Posterior cingulate gyrus (tissue), 11 donors: ENCODE measurements at regions of chr4 and their contacts with region 1.

Region 1: DNA sequence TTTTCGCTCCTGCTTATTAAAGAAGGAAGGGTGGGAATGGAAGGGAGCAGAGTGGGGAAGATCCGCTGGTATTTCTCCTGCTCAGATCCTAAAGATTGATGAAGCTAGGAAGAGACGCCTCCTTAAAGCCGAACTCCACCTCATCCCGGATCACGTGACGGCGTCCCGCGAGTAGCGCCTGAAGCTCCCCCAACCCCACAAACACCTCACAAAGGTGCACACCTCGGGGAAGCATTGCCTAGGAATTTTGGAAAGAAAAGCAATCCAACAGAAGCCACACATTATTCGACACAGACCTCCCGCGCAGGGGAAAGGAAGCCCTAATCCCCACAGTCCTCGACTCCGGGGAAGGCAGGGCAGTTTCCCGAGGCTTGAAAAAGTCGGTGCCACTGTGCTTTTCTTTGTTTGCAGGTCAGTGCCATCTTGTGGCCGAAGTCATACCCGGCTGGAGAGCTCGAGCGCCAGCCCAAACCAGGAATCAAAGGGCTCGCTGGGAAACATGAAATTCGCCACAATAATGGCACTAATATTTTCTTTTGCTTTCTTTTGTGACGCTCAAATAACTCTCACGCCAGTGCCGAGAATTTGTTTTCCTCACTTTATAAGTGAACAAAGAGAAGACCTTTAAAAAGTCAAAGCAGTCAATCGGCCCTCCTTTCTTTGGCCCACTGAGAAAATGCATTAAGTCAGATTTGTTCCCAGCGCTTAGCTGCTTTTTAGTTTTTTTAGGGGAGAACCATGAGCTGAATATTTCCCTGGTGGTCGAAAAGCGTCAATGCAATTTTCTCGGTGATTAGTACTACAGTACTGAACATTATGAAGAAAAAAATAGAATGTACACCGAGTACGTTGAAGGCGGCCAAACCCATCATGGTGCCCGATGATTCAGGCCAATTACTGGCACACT is at the start of gene NPY1R:
- DNase-seq: peak; percentile 43 to 95 (median 74)

Region 2: GRCh38 chr4:162131256-162131655 is 1201.5 kb before region 1 on chr4:
- intact Hi-C with region 1: no loop called
- DNase-seq: no peak

Region 3: DNA sequence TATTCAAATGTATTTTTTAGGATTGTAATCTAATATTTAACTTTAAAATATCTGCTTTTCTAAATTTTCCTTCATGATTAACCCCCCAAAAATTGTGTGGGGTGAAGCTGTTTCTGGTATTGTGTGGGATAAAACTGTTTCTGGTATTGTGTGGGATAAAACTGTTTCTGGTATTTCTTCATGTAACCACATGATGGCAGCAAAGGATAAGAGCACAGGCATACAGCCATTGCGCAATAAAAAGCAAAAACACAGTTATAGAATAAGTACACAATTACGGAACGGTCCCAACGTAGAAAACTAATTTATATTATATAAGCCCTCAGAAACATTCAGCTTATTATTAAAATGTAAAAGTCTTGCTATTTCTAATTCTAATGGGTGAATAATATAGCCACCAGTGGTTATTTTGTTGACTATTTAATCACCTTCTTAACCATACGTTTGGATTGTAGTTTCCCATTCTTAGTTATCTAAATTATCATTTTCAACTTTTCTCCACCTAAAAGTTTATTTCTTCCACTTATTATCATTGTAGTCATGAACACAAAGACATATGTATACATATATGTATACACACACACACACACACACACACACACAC is 835.1 kb before region 1 on chr4:
- intact Hi-C with region 1: loop called (anchors 1 kb)
- DNase-seq: no peak

Region 4: DNA sequence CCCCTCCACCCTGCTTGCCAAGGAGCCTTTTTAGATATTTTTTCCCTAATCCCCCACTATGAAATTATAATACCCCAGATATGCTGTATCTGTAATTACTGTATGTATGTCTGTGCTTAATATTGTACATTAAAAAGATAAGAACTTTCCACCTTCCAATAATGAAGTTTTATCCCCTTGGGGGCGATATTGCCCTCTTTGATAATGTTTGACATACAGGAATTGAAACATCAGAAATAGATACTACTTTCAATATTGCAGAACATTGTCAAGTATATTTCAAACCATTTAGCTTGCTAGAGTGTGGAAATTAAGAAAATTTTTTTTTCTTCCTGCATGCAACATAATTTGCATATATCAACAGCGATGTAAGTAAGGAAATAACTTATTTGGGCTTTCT is 225.0 kb before region 1 on chr4:
- intact Hi-C with region 1: loop called (anchors 5 kb)
- DNase-seq: no peak

Region 5: GRCh38 chr4:163166041-163166579 is 166.6 kb before region 1 on chr4:
- intact Hi-C with region 1: loop called (anchors 5 kb)
- DNase-seq: peak; percentile 18 to 91 (median 38)

Region 6: DNA sequence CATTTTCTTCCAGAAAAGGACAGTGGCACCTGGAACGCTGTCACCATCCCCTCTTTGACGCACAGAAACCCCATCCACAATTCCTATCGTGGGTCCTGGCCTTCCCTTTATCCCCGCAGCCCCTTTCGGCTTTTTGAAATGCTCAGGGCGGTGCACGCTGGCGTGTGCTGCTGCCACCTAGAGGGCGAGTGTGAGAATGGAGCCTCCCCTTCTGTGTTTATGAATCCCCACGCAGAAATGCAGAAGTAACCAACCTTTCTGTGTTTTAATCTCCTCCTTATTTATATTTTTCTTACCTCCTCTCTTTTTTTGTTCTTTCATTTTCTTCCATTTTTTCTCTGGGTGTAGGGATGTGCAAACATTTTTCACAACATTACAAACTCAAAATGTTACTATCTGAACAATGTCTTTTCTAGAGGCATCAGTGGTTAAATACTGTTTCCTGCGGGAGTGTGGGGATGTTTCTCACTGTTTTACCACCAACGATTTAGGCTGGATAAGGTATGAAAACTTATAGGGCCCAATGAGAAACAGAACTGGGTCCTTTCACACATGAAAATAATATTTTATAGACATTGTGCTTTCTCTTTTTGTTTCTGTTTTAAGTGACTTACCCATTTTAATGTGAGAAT is 211.8 kb after region 1 on chr4:
- intact Hi-C with region 1: loop called (anchors 10 kb)
- DNase-seq: peak; percentile 14 to 93 (median 60)